Panc1 (cell line): ENCODE measurements at regions of chr1 and their contacts with region 1.

Region 1: DNA sequence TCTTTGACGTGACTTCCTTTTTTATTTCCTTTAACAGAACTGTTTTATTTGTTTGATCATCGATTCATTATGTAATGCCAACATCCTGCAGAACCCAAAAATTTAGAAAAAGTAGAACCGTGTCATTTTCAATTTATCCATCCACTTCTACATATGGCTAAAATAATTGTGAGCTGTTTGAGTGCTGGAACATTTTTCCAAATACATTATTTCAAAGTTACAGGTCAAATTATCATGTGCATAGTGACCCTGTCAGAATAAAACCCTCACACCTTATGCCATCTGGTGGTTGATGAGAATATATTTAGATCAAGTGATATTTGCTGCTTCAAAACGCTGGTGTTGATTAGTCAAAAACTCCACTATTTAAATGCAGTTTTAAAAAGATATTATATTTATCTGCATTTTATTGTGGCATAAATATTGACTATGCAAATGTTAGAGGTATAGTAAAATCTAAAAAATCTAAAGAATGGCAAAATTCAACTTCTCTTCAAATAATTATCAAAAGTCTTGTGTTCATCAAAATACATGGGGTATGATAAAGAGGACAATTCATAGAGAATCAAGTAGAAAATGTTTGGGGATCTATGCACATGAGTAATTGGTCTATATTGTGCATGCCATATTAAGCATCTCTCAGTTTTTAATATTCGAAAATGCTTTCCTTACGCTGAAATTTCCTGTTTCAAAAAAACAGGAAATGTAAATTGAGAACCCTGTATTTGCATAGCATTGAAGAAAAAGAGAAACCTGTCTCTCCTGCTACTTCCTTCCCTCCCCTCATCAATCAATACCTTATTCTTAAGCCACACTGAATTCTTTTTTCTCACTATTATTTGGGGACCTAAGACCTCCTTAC is 39.7 kb downstream of the UBE2U start:
- DNase-seq: no peak
- ATAC-seq: peak; percentile 73; the same call in 1 of the 2 replicates
- H3K4me3 ChIP-seq: no peak overlapping the region
- H3K27ac ChIP-seq: peak overlapping the region; percentile 45; the same call in 1 of the 2 replicates
- H3K4me1 ChIP-seq: peaks cover 22% of the 10 kb centered on the region
- H3K27me3 ChIP-seq: no peaks in the 10 kb centered on the region
- CTCF ChIP-seq: peak; percentile 64; the same call in 1 of the 2 replicates

Region 2: DNA sequence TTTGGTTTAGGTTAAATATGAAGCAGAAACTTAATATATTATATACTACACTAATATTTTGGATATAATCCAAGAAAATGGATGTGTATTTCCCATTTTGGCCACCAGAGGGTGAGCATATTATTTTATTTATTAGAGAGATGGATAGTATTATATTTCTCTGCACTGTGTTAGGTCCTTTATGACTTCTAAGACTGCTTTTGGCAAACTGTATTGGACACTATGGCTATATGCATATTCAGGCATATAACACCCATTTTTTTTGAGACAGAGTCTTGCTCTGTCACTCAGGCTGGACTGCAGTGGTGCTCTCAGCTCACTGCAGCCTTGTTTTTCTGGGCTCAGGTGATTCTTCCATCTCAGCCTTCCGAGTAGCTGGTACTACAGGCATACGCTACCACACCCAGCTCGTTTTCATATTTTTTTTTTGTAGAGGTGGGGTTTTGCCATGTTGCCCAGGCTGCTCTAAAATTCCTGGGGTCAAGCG is 667.7 kb before region 1 on chr1:
- CTCF ChIA-PET with region 1: no interaction called
- POLR2A ChIA-PET with region 1: no interaction called
- in situ Hi-C with region 1: no loop called
- intact Hi-C with region 1: loop called (anchors 5 kb)
- DNase-seq: peak; percentile 33
- ATAC-seq: peak; percentile 75
- H3K4me3 ChIP-seq: no peak overlapping the region
- H3K27ac ChIP-seq: no peak overlapping the region
- H3K4me1 ChIP-seq: no peaks in the 10 kb centered on the region
- H3K27me3 ChIP-seq: no peaks in the 10 kb centered on the region
- CTCF ChIP-seq: peak; percentile 77

Region 3: DNA sequence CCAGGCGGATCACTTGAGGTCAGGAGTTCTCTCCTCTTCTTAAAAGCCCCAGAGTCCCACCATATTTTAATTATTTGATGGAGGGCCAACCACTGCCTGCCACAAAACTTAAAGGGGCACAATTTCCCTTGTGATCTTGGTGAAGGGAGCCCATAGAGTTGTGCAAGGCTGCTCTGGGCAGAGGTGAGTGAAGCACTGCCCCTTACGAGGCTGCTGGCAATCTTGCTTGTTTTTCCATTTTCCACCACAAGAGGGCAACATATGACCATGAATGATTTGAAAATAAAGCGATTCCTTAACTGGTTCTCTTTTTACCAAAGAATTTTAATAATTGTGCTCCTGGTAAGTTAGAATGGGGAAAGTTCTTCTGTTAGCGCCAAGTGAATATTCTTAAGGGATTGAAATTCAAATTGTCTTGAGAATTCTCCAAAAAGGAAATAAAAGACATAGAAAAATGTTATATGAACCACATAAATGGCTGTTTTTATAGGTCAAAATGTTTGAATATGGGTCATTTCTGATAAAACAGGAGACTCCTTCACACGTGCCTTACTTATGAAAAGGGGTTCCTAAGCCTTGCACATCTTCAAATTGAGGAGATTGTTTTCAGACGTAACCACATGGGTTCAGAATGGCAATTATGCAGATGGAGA is 627.2 kb before region 1 on chr1:
- CTCF ChIA-PET with region 1: no interaction called
- POLR2A ChIA-PET with region 1: no interaction called
- in situ Hi-C with region 1: no loop called
- intact Hi-C with region 1: loop called (anchors 5 kb)
- DNase-seq: peak; percentile 58
- ATAC-seq: peak; percentile 81
- H3K4me3 ChIP-seq: no peak overlapping the region
- H3K27ac ChIP-seq: no peak overlapping the region
- H3K4me1 ChIP-seq: peaks cover 7% of the 10 kb centered on the region
- H3K27me3 ChIP-seq: no peaks in the 10 kb centered on the region
- CTCF ChIP-seq: peak; percentile 80

Region 4: DNA sequence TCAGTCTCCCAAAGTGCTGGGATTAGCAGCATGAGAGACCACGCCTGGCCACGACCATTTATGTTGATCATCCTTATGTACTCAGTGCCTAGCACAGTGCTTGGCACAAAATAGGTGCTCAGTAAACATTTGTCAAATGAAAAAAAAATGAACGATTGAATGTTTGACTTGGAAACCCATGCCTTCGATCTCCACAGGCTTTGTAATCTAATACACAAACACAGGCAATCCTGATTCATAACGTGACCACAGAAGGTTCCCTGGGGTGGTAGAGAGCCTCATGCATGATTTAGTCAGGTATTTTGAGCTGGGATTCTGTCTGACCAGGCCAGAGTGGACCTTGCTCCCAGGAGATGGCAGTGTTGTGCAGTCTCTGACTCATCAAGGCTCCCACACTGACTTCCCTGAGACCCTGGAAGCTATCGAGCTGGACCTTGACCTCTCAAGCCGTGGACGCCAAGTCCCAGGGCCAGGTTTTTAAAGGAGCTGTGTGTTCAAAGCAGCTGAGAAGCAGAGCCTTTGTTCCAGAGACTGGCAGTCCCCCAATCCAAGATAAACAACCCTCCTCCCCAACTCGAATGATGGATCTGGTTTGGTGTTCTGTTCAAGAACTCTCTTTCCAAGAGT is 568.8 kb before region 1 on chr1:
- CTCF ChIA-PET with region 1: interaction called, 8 read pairs
- POLR2A ChIA-PET with region 1: no interaction called
- in situ Hi-C with region 1: loop called (anchors 25 kb)
- intact Hi-C with region 1: loop called (anchors 2 kb)
- DNase-seq: peak; percentile 73
- ATAC-seq: peak; percentile 98
- H3K4me3 ChIP-seq: no peak overlapping the region
- H3K27ac ChIP-seq: peak overlapping the region; percentile 64; the same call in 1 of the 2 replicates
- H3K4me1 ChIP-seq: 0 out of 2 replicates have a peak, but pooled peaks cover 5% of the 10 kb centered on the region
- H3K27me3 ChIP-seq: no peaks in the 10 kb centered on the region
- CTCF ChIP-seq: peak; percentile 84

Region 5: DNA sequence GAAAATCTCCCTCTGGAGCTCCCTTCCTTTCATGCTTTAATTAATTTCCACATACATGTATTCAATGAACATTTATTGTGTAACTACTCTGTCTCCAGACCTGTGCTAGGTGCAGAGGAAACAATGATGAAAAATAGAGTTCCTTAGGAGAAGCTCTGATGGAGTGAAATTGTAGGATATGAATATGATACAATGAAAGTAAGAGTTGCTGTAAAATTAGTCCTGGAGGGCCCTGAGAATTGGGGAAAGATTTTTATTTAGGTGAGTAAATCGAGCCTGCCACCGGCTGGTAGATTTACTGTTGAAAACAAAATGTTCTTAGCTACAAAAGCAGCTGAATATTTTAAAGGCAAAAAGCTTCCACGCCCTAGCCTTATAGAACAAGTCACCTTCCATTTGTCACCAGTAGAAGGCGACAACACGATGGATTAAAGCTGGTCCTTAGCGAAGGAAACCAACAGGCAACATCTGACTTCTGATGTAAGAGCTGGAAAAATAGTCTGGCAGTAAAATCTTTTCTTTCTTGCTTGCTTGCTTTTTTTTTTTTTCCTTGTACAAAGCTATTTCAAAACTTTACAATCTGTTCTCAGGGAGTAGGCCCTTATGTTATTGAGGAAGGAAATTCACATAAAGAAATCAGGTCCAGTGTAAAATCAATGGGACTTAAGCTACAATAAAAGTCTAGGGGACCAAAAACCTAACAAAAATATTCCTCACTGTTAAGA is 551.3 kb before region 1 on chr1:
- CTCF ChIA-PET with region 1: interaction called, 6 read pairs
- POLR2A ChIA-PET with region 1: no interaction called
- in situ Hi-C with region 1: loop called (anchors 25 kb)
- intact Hi-C with region 1: loop called (anchors 5 kb)
- DNase-seq: peak; percentile 92
- ATAC-seq: peak; percentile 95
- H3K4me3 ChIP-seq: no peak overlapping the region
- H3K27ac ChIP-seq: peak overlapping the region; percentile 93
- H3K4me1 ChIP-seq: peaks cover 14% of the 10 kb centered on the region
- H3K27me3 ChIP-seq: no peaks in the 10 kb centered on the region
- CTCF ChIP-seq: peak; percentile 87

Region 6: GRCh38 chr1:63773815-63774616 is 469.1 kb before region 1 on chr1 and contains the start of gene ROR1:
- CTCF ChIA-PET with region 1: no interaction called
- POLR2A ChIA-PET with region 1: no interaction called
- in situ Hi-C with region 1: no loop called
- intact Hi-C with region 1: loop called (anchors 10 kb)
- DNase-seq: peak; percentile 66
- ATAC-seq: peak; percentile 94
- H3K4me3 ChIP-seq: peak within 1 kb of the TSS; percentile 68 to 88
- H3K27ac ChIP-seq: peak within 1 kb of the TSS; percentile 91
- H3K4me1 ChIP-seq: peaks cover 50% of the 10 kb centered on the region
- H3K27me3 ChIP-seq: no peaks in the 10 kb centered on the region
- CTCF ChIP-seq: peak; percentile 91
- total RNA-seq, gene ROR1: 19.3 TPM

Region 7: GRCh38 chr1:63935143-63935542 is 308.0 kb before region 1 on chr1:
- CTCF ChIA-PET with region 1: no interaction called
- POLR2A ChIA-PET with region 1: no interaction called
- in situ Hi-C with region 1: no loop called
- intact Hi-C with region 1: loop called (anchors 10 kb)
- DNase-seq: no peak
- ATAC-seq: peak; percentile 82
- H3K4me3 ChIP-seq: no peak overlapping the region
- H3K27ac ChIP-seq: no peak overlapping the region
- H3K4me1 ChIP-seq: peaks cover 10% of the 10 kb centered on the region; the same call in 1 of the 2 replicates
- H3K27me3 ChIP-seq: no peaks in the 10 kb centered on the region
- CTCF ChIP-seq: peak; percentile 60

Region 8: GRCh38 chr1:64019818-64020217 is 223.3 kb before region 1 on chr1:
- CTCF ChIA-PET with region 1: no interaction called
- POLR2A ChIA-PET with region 1: no interaction called
- in situ Hi-C with region 1: no loop called
- intact Hi-C with region 1: no loop called
- DNase-seq: no peak
- ATAC-seq: no peak
- H3K4me3 ChIP-seq: no peak overlapping the region
- H3K27ac ChIP-seq: no peak overlapping the region
- H3K4me1 ChIP-seq: no peaks in the 10 kb centered on the region
- H3K27me3 ChIP-seq: no peaks in the 10 kb centered on the region
- CTCF ChIP-seq: no peak

Region 9: DNA sequence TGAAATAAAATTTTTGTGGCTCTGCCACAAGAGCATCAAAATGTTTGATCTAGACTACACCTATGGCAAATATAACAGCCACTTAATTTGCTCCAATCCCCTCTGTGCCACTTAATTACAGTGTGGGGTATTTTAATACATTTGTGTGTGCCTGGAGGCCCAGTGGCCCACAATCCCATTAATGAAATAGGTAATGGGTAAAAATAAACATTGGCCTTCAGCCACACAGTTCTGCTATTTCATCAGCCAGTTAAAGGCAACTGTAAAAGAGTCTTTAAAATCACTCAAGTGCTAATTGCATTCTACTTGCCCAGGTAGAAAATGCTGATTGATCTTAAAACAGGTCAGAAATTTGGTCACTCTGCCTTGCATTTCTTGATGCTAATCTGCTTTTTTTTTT is 191.3 kb before region 1 on chr1:
- CTCF ChIA-PET with region 1: no interaction called
- POLR2A ChIA-PET with region 1: no interaction called
- in situ Hi-C with region 1: no loop called
- intact Hi-C with region 1: no loop called
- DNase-seq: no peak
- ATAC-seq: no peak
- H3K4me3 ChIP-seq: no peak overlapping the region
- H3K27ac ChIP-seq: no peak overlapping the region
- H3K4me1 ChIP-seq: peaks cover 3% of the 10 kb centered on the region
- H3K27me3 ChIP-seq: no peaks in the 10 kb centered on the region
- CTCF ChIP-seq: no peak

Region 10: DNA sequence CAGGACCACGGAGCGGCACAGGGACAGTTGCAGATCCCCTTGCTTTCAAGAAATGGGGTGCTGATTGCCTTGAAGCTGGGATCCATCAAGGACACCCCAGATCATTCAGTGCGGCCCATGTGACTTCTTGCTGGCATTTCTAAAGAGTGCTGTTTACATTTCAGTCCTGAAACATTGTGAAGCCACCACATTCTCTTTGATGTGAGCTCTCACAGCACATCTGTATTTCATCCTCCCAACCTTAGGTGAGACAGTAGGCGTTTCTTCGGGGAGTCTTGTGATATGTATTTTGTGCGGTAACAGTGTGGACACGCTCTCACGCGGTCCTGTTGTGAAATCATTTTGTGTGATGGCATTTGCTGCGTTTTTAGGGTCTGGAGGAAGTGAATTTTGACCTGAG is 284.0 kb after region 1 on chr1:
- CTCF ChIA-PET with region 1: no interaction called
- POLR2A ChIA-PET with region 1: no interaction called
- in situ Hi-C with region 1: no loop called
- intact Hi-C with region 1: no loop called
- DNase-seq: no peak
- ATAC-seq: no peak
- H3K4me3 ChIP-seq: no peak overlapping the region
- H3K27ac ChIP-seq: no peak overlapping the region
- H3K4me1 ChIP-seq: peaks cover 20% of the 10 kb centered on the region
- H3K27me3 ChIP-seq: no peaks in the 10 kb centered on the region
- CTCF ChIP-seq: no peak